CD8-positive, alpha-beta T cell (primary cell): ENCODE measurements at regions of chr19 and their contacts with region 1.

Region 1: DNA sequence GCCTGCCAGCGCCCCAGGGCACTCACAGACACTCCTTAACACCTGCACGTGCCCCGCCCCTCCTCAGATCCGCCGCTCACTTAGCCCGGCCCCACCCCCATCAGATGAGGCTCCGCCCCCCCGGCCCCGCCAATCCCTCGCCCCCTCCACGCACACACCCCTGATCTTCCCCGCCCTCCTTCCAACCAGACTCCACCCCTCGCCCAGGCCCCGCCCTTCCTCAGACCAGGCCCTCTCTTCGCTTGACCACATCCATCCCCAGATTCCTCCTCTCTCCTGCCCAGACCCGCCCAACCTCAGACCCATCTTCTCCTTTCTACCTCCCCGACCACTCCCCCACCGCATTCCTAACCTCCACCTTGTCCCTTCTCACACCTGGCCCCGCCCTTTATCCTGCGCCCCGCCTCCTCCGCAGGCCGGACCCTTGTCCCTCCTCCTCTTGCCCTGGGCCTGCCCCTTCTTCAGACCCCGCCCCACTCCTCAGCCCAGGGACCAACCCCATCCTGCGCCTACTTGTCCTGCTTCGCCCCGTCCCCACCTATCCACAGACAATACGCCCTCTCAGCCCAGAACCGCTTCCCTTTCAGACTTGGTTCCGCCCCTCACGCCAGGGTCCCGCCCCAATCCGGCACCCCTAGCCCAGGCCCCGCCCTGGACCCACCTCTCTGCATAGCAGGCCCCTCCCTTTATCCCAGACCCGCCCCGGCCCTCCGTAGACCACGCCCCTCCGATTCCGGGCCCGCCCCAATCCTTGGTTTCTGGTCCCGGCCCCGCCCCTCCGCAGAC is 452 bp upstream of the KLHL26 start:
- DNase-seq: peak; percentile 97 to 100 (median 99)
- ATAC-seq: peak; percentile 87
- H3K4me3 ChIP-seq: peak overlapping the region; percentile 64 to 79
- H3K4me3 Mint-ChIP-seq: peak overlapping the region; percentile 89
- H3K27ac ChIP-seq: peak overlapping the region; percentile 14 to 78
- H3K27ac Mint-ChIP-seq: peak overlapping the region; percentile 82
- H3K4me1 ChIP-seq: peaks cover 22% of the 10 kb centered on the region
- H3K4me1 Mint-ChIP-seq: peaks cover 36% of the 10 kb centered on the region
- H3K27me3 ChIP-seq: no peaks in the 10 kb centered on the region
- H3K27me3 Mint-ChIP-seq: peaks cover 6% of the 10 kb centered on the region
- CTCF ChIP-seq: no peak

Region 2: GRCh38 chr19:18203863-18204393 is 432.4 kb before region 1 on chr19 and contains the start of gene RAB3A:
- CTCF ChIA-PET with region 1: no interaction called
- POLR2A ChIA-PET with region 1: no interaction called
- intact Hi-C with region 1: loop called in 1 of 2 experiments (anchors 10 kb)
- DNase-seq: peak; percentile 98 to 100 (median 100)
- ATAC-seq: peak; percentile 90
- H3K4me3 ChIP-seq: peak within 1 kb of the TSS; percentile 60 to 91
- H3K4me3 Mint-ChIP-seq: peak within 1 kb of the TSS; percentile 96
- H3K27ac ChIP-seq: peak within 1 kb of the TSS; percentile 76 to 81
- H3K27ac Mint-ChIP-seq: peak within 1 kb of the TSS; percentile 96
- H3K4me1 ChIP-seq: peaks cover 17% of the 10 kb centered on the region
- H3K4me1 Mint-ChIP-seq: peaks cover 21% of the 10 kb centered on the region
- H3K27me3 ChIP-seq: no peaks in the 10 kb centered on the region
- H3K27me3 Mint-ChIP-seq: peaks cover 5% of the 10 kb centered on the region
- CTCF ChIP-seq: no peak
- total RNA-seq, gene RAB3A: 16.8 to 19.4 TPM

Region 3: GRCh38 chr19:18588611-18589379 is 47.6 kb before region 1 on chr19 and contains the start of gene REX1BD:
- CTCF ChIA-PET with region 1: interaction called, 5 read pairs
- POLR2A ChIA-PET with region 1: no interaction called
- intact Hi-C with region 1: loop called (anchors 1 kb)
- DNase-seq: peak; percentile 71 to 94 (median 89)
- ATAC-seq: peak; percentile 81
- H3K4me3 ChIP-seq: peak within 1 kb of the TSS; percentile 62 to 83
- H3K4me3 Mint-ChIP-seq: peak within 1 kb of the TSS; percentile 93
- H3K27ac ChIP-seq: peak within 1 kb of the TSS; percentile 83 to 86
- H3K27ac Mint-ChIP-seq: peak within 1 kb of the TSS; percentile 95
- H3K4me1 ChIP-seq: peaks cover 31% of the 10 kb centered on the region
- H3K4me1 Mint-ChIP-seq: peaks cover 34% of the 10 kb centered on the region
- H3K27me3 ChIP-seq: no peaks in the 10 kb centered on the region
- H3K27me3 Mint-ChIP-seq: no peaks in the 10 kb centered on the region
- CTCF ChIP-seq: peak; percentile 77
- total RNA-seq, gene REX1BD: 85.6 to 91.1 TPM

Region 4: GRCh38 chr19:18700501-18701249 is 64.3 kb after region 1 on chr19:
- CTCF ChIA-PET with region 1: no interaction called
- POLR2A ChIA-PET with region 1: no interaction called
- intact Hi-C with region 1: loop called in 1 of 2 experiments (anchors 1 kb)
- DNase-seq: peak; percentile 47 to 84 (median 73)
- ATAC-seq: peak; percentile 97
- H3K4me3 ChIP-seq: peak overlapping the region; percentile 69 to 82
- H3K4me3 Mint-ChIP-seq: peak overlapping the region; percentile 88
- H3K27ac ChIP-seq: peak overlapping the region; percentile 73 to 75
- H3K27ac Mint-ChIP-seq: peak overlapping the region; percentile 89
- H3K4me1 ChIP-seq: peaks cover 34% of the 10 kb centered on the region
- H3K4me1 Mint-ChIP-seq: peaks cover 38% of the 10 kb centered on the region
- H3K27me3 ChIP-seq: no peaks in the 10 kb centered on the region
- H3K27me3 Mint-ChIP-seq: no peaks in the 10 kb centered on the region
- CTCF ChIP-seq: no peak

Region 5: GRCh38 chr19:18839465-18840287 is 203.3 kb after region 1 on chr19:
- CTCF ChIA-PET with region 1: no interaction called
- POLR2A ChIA-PET with region 1: no interaction called
- intact Hi-C with region 1: no loop called
- DNase-seq: no peak
- ATAC-seq: no peak
- H3K4me3 ChIP-seq: no peak overlapping the region
- H3K4me3 Mint-ChIP-seq: no peak overlapping the region
- H3K27ac ChIP-seq: no peak overlapping the region
- H3K27ac Mint-ChIP-seq: peak overlapping the region; percentile 76
- H3K4me1 ChIP-seq: peaks cover 89% of the 10 kb centered on the region
- H3K4me1 Mint-ChIP-seq: peaks cover 85% of the 10 kb centered on the region
- H3K27me3 ChIP-seq: no peaks in the 10 kb centered on the region
- H3K27me3 Mint-ChIP-seq: no peaks in the 10 kb centered on the region
- CTCF ChIP-seq: no peak

Region 6: GRCh38 chr19:18932216-18932841 is 296.0 kb after region 1 on chr19:
- CTCF ChIA-PET with region 1: no interaction called
- POLR2A ChIA-PET with region 1: no interaction called
- intact Hi-C with region 1: loop called in 1 of 2 experiments (anchors 1 kb)
- DNase-seq: peak; percentile 69 to 87 (median 81)
- ATAC-seq: peak; percentile 96
- H3K4me3 ChIP-seq: peak overlapping the region; percentile 35 to 52
- H3K4me3 Mint-ChIP-seq: peak overlapping the region; percentile 80
- H3K27ac ChIP-seq: no peak overlapping the region
- H3K27ac Mint-ChIP-seq: no peak overlapping the region
- H3K4me1 ChIP-seq: peaks cover 9% of the 10 kb centered on the region
- H3K4me1 Mint-ChIP-seq: peaks cover 5% of the 10 kb centered on the region
- H3K27me3 ChIP-seq: peaks cover 0 to 6% of the 10 kb centered on the region in 2 experiments
- H3K27me3 Mint-ChIP-seq: peaks cover 14% of the 10 kb centered on the region
- CTCF ChIP-seq: no peak

Region 7: DNA sequence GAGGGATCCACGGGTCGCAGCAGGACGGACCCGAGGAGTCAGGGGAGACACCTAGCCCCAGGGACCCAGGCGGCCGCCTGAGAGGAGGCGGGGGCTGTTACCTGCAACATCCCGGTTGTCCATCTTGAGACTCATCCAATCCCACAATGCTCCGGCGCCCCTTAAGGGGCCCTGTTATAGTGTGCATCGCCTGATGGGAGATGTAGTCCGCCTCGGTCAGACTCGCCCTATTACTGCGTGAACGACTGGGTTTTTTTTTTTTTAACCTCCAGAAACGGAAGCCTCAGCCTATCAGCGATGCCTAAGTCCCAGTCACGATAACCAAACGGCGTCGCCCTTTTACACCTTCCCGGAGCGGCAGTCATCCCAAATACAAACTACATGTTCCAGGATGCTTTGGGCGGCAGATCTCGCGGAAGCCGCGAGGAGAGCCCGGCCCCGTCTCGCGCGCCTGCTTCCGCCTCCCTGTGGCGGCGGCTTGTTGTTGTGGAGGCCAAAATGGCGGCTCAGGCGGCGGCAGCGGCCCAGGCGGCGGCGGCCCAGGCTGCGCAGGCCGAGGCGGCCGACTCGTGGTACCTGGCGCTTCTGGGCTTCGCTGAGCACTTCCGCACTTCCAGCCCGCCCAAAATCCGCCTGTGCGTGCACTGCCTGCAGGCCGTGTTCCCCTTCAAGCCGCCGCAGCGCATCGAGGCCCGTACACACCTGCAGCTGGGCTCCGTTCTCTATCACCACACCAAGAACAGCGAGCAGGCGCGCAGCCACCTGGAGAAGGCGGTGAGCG is 684.2 kb after region 1 on chr19 and contains the starts of genes MAU2 and SUGP1:
- CTCF ChIA-PET with region 1: no interaction called
- POLR2A ChIA-PET with region 1: no interaction called
- intact Hi-C with region 1: loop called in 1 of 2 experiments (anchors 10 kb)
- DNase-seq: peak; percentile 81 to 95 (median 88)
- ATAC-seq: peak; percentile 90
- H3K4me3 ChIP-seq: peak within 1 kb of the TSS; percentile 88 to 94
- H3K4me3 Mint-ChIP-seq: peak within 1 kb of the TSS; percentile 99
- H3K27ac ChIP-seq: peak within 1 kb of the TSS; percentile 88 to 97
- H3K27ac Mint-ChIP-seq: peak within 1 kb of the TSS; percentile 99
- H3K4me1 ChIP-seq: peaks cover 35% of the 10 kb centered on the region
- H3K4me1 Mint-ChIP-seq: peaks cover 40% of the 10 kb centered on the region
- H3K27me3 ChIP-seq: no peaks in the 10 kb centered on the region
- H3K27me3 Mint-ChIP-seq: no peaks in the 10 kb centered on the region
- CTCF ChIP-seq: no peak
- total RNA-seq, gene MAU2: 137 to 139 TPM
- total RNA-seq, gene SUGP1: 60.9 to 68.2 TPM